ENCODE measurements at regions of chr12 and their contacts with region 1.

Region 1: DNA sequence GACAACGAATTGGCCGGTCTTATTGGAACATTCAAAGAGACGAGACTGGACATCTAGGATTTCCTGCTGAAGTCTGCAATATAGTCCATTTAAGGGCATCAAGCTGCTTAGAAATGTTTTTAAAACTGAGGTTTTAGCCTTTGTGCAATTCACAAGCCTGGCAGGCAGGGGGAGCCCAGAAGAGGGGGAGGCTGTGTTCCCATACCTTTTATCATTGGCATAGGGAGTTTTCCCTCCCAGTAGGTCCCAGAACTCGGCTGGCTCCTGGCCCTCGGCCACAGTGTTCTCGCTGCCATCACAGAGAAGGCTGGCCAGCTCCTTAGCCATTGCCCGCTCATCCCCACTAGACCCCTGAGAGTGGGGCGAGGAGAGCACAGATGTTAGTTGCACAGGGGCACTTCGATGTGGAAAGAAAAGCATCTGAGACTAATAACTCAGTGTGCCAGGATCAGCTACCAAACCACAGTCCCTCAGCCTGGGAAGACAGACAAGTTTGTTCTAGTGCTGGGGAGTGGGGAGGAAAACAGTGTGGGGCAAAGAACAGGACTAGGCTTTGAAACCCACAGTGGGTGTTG is 15.1 kb downstream of the AVIL start:
- H3K4me3 ChIP-seq: no peak overlapping the region
- H3K27ac ChIP-seq: no peak overlapping the region
- H3K4me1 ChIP-seq: no peaks in the 10 kb centered on the region
- CTCF ChIP-seq: peak; percentile 60

Region 2: GRCh38 chr12:57299514-57300016 is 503.8 kb before region 1 on chr12:
- CTCF ChIA-PET with region 1: no interaction called
- POLR2A ChIA-PET with region 1: no interaction called
- H3K4me3 ChIP-seq: no peak overlapping the region
- H3K27ac ChIP-seq: no peak overlapping the region
- H3K4me1 ChIP-seq: peaks cover 6% of the 10 kb centered on the region
- CTCF ChIP-seq: no peak

Region 3: DNA sequence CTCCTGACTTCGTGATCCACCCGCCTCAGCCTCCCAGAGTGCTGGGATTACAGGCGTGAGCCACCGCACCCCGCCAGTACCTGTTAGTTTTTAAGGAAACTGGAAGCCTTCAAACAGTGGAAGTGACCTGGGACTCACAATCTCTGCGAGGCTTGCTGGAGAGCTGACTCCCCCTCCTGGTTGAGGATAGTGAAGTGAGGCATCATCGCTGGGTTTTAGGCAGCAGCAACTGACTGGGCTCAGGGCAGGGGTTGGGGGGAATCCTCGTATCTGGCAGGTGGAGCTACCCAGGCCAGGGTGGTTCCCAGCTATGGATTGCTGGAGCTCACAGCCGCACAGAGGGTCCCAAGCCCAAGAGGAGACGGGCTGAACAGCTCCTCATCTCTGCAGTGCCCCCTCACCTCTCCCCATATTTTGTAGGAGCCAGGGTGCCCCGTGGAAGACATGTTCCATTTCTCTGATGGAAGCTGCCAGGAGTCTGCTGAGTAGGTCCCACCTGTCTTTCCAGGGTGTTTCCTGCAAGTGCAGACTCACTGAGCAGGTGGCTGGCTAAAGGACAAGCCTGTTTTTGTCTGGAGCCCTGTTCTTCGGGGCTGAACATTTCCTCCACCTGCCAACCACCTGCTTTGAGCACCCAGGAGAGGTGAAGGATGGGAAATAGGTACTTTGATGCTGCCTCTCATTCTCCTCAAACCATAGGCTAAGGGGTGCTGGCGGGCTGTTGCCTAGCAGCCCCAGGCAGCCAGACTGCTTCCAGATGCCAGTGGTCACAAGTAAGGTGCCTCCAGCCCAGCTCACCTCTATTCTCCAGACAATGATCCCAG is 12.0 kb after region 1 on chr12:
- CTCF ChIA-PET with region 1: interaction called, 27 read pairs
- POLR2A ChIA-PET with region 1: no interaction called
- H3K4me3 ChIP-seq: no peak overlapping the region
- H3K27ac ChIP-seq: no peak overlapping the region
- H3K4me1 ChIP-seq: no peaks in the 10 kb centered on the region
- CTCF ChIP-seq: no peak

Region 4: GRCh38 chr12:57829025-57829777 is 25.8 kb after region 1 on chr12:
- CTCF ChIA-PET with region 1: interaction called, 14 read pairs
- POLR2A ChIA-PET with region 1: no interaction called
- H3K4me3 ChIP-seq: no peak overlapping the region
- H3K27ac ChIP-seq: no peak overlapping the region
- H3K4me1 ChIP-seq: no peaks in the 10 kb centered on the region; the same call in 1 of the 2 replicates
- CTCF ChIP-seq: no peak